ENCODE measurements at regions of chr1 and their contacts with region 1.

Region 1: GRCh38 chr1:241531195-241532161 is 700 bp upstream of the KMO start:
- DNase-seq: peak in 3 of 14 experiments; percentile 78 to 81 (median 78)
- ATAC-seq: peak; percentile 89
- H3K4me3 ChIP-seq: peak overlapping the region; percentile 59
- H3K4me3 Mint-ChIP-seq: peak overlapping the region; percentile 97
- H3K27ac ChIP-seq: no peak overlapping the region
- H3K27ac Mint-ChIP-seq: peak overlapping the region; percentile 42
- H3K4me1 ChIP-seq: peaks cover 2% of the 10 kb centered on the region
- H3K4me1 Mint-ChIP-seq: peaks cover 6% of the 10 kb centered on the region
- H3K27me3 ChIP-seq: no peaks in the 10 kb centered on the region
- H3K27me3 Mint-ChIP-seq: no peaks in the 10 kb centered on the region
- CTCF ChIP-seq: peak; percentile 74

Region 2: GRCh38 chr1:241464985-241465384 is 66.5 kb before region 1 on chr1:
- CTCF ChIA-PET with region 1: no interaction called
- POLR2A ChIA-PET with region 1: no interaction called
- intact Hi-C with region 1: no loop called
- DNase-seq: no peak
- ATAC-seq: no peak
- H3K4me3 ChIP-seq: no peak overlapping the region
- H3K4me3 Mint-ChIP-seq: no peak overlapping the region
- H3K27ac ChIP-seq: no peak overlapping the region
- H3K27ac Mint-ChIP-seq: no peak overlapping the region
- H3K4me1 ChIP-seq: no peaks in the 10 kb centered on the region
- H3K4me1 Mint-ChIP-seq: no peaks in the 10 kb centered on the region
- H3K27me3 ChIP-seq: no peaks in the 10 kb centered on the region
- H3K27me3 Mint-ChIP-seq: peaks cover 6% of the 10 kb centered on the region
- CTCF ChIP-seq: no peak

Region 3: DNA sequence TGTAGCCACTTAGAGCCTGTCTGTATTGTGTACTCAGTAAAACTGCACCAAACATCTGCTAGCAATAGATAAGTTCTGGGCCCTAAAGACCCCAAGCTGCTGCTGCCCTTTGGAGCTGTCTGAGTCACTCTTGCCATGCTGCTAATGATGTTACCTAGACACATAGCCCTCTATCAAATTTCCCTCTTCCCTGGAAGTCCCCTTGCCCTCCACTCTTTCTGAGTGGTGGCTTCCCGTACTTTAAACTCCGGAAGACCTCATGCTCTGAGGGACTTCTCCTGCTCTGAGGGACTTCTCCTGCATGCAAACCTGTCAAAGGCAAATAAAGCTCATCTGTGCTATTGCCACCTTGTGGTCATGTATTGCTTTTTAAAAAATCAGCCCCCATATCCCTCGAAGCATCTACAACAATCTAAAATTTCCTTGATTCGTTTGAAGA is 45.9 kb before region 1 on chr1:
- CTCF ChIA-PET with region 1: no interaction called
- POLR2A ChIA-PET with region 1: no interaction called
- intact Hi-C with region 1: no loop called
- DNase-seq: no peak
- ATAC-seq: no peak
- H3K4me3 ChIP-seq: no peak overlapping the region
- H3K4me3 Mint-ChIP-seq: no peak overlapping the region
- H3K27ac ChIP-seq: no peak overlapping the region
- H3K27ac Mint-ChIP-seq: no peak overlapping the region
- H3K4me1 ChIP-seq: no peaks in the 10 kb centered on the region
- H3K4me1 Mint-ChIP-seq: no peaks in the 10 kb centered on the region
- H3K27me3 ChIP-seq: no peaks in the 10 kb centered on the region
- H3K27me3 Mint-ChIP-seq: peaks cover 8% of the 10 kb centered on the region
- CTCF ChIP-seq: peak; percentile 17

Region 4: DNA sequence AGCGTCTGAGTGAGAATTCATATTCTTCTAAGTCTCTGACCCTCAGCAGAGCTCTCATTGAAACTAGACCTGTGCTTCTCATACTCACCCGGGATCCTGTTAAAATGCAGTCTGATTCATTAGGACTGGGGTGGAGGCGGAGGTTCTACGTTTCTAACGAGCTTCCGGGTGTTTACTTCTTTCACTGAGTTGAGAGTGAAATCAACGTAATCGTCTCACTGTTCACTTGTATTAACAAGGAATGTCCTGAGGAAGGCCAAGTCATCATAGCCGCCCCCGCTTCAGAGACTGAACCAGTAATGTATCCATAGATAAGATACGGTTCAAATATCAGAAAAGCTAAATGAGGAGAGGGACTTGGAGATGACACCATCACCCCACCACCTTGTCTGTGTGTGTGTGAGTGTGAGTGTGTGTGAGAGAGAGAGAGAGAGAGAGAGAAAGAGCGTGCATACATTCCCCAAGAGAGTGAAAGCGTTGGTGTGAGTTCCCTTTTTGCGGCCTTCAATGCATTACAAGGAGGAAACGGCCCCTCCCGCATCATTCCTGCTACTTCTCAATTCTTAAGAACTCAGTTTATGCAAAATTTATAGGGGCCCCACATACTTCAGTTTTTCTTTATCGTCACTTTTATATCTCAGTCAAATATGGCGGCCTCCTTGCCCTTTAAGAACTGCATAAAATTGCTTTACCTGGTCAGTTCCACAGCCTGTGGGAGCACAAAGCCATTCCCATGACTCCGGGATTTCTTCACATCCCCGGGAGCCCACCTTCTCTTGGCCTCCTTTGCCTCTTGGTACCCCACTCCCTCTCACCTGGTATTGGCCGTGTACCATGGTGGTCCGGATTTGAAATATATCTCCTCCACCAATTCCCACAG is 20.5 kb after region 1 on chr1:
- CTCF ChIA-PET with region 1: no interaction called
- POLR2A ChIA-PET with region 1: interaction called, 5 read pairs
- intact Hi-C with region 1: loop called in 1 of 2 experiments (anchors 2 kb)
- DNase-seq: peak in 13 of 14 experiments; percentile 3 to 77 (median 32)
- ATAC-seq: peak; percentile 92
- H3K4me3 ChIP-seq: peak overlapping the region; percentile 49
- H3K4me3 Mint-ChIP-seq: peak overlapping the region; percentile 92
- H3K27ac ChIP-seq: peak overlapping the region; percentile 54 to 69
- H3K27ac Mint-ChIP-seq: peak overlapping the region; percentile 95
- H3K4me1 ChIP-seq: peaks cover 12% of the 10 kb centered on the region
- H3K4me1 Mint-ChIP-seq: peaks cover 25% of the 10 kb centered on the region
- H3K27me3 ChIP-seq: no peaks in the 10 kb centered on the region
- H3K27me3 Mint-ChIP-seq: no peaks in the 10 kb centered on the region
- CTCF ChIP-seq: no peak

Region 5: GRCh38 chr1:241627453-241628259 is 96.2 kb after region 1 on chr1:
- CTCF ChIA-PET with region 1: interaction called, 4 read pairs
- POLR2A ChIA-PET with region 1: no interaction called
- intact Hi-C with region 1: loop called (anchors 1 kb)
- DNase-seq: peak in 10 of 14 experiments; percentile 8 to 82 (median 40)
- ATAC-seq: peak; percentile 89
- H3K4me3 ChIP-seq: peak overlapping the region; percentile 30
- H3K4me3 Mint-ChIP-seq: peak overlapping the region; percentile 88
- H3K27ac ChIP-seq: peak overlapping the region; percentile 13 to 59
- H3K27ac Mint-ChIP-seq: peak overlapping the region; percentile 94
- H3K4me1 ChIP-seq: peaks cover 2% of the 10 kb centered on the region
- H3K4me1 Mint-ChIP-seq: peaks cover 24% of the 10 kb centered on the region
- H3K27me3 ChIP-seq: no peaks in the 10 kb centered on the region
- H3K27me3 Mint-ChIP-seq: no peaks in the 10 kb centered on the region
- CTCF ChIP-seq: peak; percentile 88

Region 6: DNA sequence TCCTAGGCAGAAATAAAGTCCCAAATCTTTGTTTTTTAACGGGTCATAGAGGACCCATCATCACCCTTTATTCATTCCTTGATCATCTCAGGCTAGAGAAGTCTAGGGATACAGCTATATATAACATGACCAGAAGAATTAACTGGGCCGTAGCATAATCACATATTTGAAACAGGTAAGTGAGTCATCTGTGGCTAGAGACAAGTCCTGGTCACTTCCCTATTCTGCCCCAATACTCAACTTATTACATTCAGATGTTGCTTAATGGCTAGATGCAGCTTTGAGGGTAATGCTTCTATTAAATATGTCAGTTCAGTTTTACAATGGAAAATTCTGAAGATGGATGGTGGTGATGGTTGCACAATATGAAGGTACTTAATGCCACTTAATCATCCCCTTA is 363.5 kb after region 1 on chr1:
- CTCF ChIA-PET with region 1: no interaction called
- POLR2A ChIA-PET with region 1: no interaction called
- intact Hi-C with region 1: loop called in 1 of 2 experiments (anchors 5 kb)
- DNase-seq: no peak
- ATAC-seq: no peak
- H3K4me3 ChIP-seq: no peak overlapping the region
- H3K4me3 Mint-ChIP-seq: no peak overlapping the region
- H3K27ac ChIP-seq: no peak overlapping the region
- H3K27ac Mint-ChIP-seq: no peak overlapping the region
- H3K4me1 ChIP-seq: no peaks in the 10 kb centered on the region
- H3K4me1 Mint-ChIP-seq: no peaks in the 10 kb centered on the region
- H3K27me3 ChIP-seq: no peaks in the 10 kb centered on the region
- H3K27me3 Mint-ChIP-seq: no peaks in the 10 kb centered on the region
- CTCF ChIP-seq: no peak

Region 7: GRCh38 chr1:241998412-241998921 is 467.0 kb after region 1 on chr1:
- CTCF ChIA-PET with region 1: interaction called, 3 read pairs
- POLR2A ChIA-PET with region 1: no interaction called
- intact Hi-C with region 1: loop called (anchors 1 to 5 kb)
- DNase-seq: peak; percentile 3 to 64 (median 25)
- ATAC-seq: peak; percentile 46
- H3K4me3 ChIP-seq: peak overlapping the region; percentile 25
- H3K4me3 Mint-ChIP-seq: no peak overlapping the region
- H3K27ac ChIP-seq: no peak overlapping the region
- H3K27ac Mint-ChIP-seq: no peak overlapping the region
- H3K4me1 ChIP-seq: peaks cover 6% of the 10 kb centered on the region
- H3K4me1 Mint-ChIP-seq: no peaks in the 10 kb centered on the region
- H3K27me3 ChIP-seq: peaks cover 0 to 2% of the 10 kb centered on the region in 2 experiments
- H3K27me3 Mint-ChIP-seq: peaks cover 4% of the 10 kb centered on the region
- CTCF ChIP-seq: peak; percentile 76

Region 8: GRCh38 chr1:242017584-242018233 is 486.2 kb after region 1 on chr1:
- CTCF ChIA-PET with region 1: no interaction called
- POLR2A ChIA-PET with region 1: no interaction called
- intact Hi-C with region 1: loop called (anchors 5 kb)
- DNase-seq: peak in 9 of 14 experiments; percentile 3 to 57 (median 15)
- ATAC-seq: no peak
- H3K4me3 ChIP-seq: no peak overlapping the region
- H3K4me3 Mint-ChIP-seq: no peak overlapping the region
- H3K27ac ChIP-seq: no peak overlapping the region
- H3K27ac Mint-ChIP-seq: no peak overlapping the region
- H3K4me1 ChIP-seq: no peaks in the 10 kb centered on the region
- H3K4me1 Mint-ChIP-seq: no peaks in the 10 kb centered on the region
- H3K27me3 ChIP-seq: no peaks in the 10 kb centered on the region
- H3K27me3 Mint-ChIP-seq: no peaks in the 10 kb centered on the region
- CTCF ChIP-seq: peak; percentile 60